ENCODE measurements at regions of chr5 and their contacts with region 1.

Region 1: DNA sequence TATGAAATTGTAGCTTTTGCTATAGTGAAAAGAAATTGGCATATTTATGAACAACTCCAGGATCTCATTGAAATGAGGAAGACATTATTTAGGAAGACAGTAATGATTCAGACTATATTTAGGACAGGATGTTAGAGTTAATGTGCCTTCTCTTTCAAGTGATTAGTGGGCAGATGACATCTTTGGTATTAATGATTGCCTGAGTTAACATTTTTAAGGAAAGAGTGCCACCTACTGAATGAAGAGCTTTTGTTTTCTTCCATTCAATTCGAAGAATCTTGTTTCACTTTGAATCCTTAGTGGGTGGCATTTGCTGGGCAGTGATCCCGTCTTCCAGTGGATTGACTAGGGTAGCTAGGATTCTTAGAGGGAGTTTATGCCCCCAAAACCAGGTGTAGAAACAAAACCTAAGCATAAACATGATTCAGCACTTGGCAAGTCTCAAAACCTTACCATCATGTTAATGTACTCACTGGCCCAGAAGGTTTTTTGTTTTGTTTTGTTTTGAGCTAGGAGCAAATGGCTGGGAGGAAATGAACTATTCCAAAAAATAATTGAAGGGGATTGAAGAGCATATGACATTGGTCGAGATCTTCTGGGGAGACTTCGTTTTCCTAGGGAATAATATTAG is 23.2 kb downstream of the MAP3K1 start:
- DNase-seq: peak; percentile 33
- ATAC-seq: no peak
- H3K4me3 ChIP-seq: no peak overlapping the region
- H3K27ac ChIP-seq: no peak overlapping the region
- H3K4me1 ChIP-seq: peaks cover 53% of the 10 kb centered on the region
- H3K27me3 ChIP-seq: no peaks in the 10 kb centered on the region
- CTCF ChIP-seq: peak; percentile 66
- EP300 ChIP-seq: no peak
- POLR2A ChIP-seq: no peak
- RAD21 ChIP-seq: peak; percentile 56

Region 2: GRCh38 chr5:56396634-56397033 is 441.9 kb before region 1 on chr5:
- CTCF ChIA-PET with region 1: no interaction called
- POLR2A ChIA-PET with region 1: no interaction called
- in situ Hi-C with region 1: no loop called
- intact Hi-C with region 1: no loop called
- DNase-seq: no peak
- ATAC-seq: no peak
- H3K4me3 ChIP-seq: no peak overlapping the region
- H3K27ac ChIP-seq: no peak overlapping the region
- H3K4me1 ChIP-seq: no peaks in the 10 kb centered on the region
- H3K27me3 ChIP-seq: no peaks in the 10 kb centered on the region
- CTCF ChIP-seq: no peak
- EP300 ChIP-seq: no peak
- POLR2A ChIP-seq: no peak
- RAD21 ChIP-seq: no peak

Region 3: DNA sequence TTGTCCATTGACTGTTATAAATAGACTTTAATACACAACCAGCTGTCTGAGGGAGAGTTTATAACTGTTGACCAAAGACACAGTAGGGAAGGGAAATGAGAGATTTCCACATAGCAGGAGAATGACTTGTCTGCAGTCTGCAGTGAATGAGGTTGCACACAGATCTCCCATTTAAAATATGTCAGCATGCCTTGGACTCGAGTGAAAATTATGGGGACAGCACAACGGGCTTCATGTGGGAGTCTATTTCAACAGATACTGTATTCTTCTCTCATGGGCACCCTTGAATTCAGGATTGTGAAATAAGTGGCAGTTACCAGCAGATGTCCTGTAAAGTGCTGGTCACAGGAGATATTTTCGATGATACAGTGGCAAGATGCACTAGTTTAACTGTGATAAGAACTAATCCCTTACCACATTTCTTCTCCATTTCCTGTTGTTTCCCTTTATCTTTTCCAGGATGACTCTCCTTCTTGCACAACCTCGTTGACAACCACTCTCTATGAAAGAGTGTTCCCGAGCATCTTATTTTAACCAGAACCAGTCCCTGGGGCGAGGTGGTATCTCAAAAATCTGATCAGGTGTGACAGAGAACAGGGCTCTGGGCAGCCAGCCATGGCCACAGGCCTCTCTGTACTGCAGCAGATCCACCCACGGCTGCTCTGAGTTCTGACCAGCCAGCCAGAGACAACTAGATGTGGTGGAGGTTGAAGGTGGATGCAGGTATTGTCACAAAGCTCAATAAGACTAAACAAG is 74.6 kb before region 1 on chr5:
- CTCF ChIA-PET with region 1: no interaction called
- POLR2A ChIA-PET with region 1: no interaction called
- in situ Hi-C with region 1: no loop called
- intact Hi-C with region 1: loop called (anchors 2 kb)
- DNase-seq: peak; percentile 26
- ATAC-seq: peak; percentile 76
- H3K4me3 ChIP-seq: peak overlapping the region in 1 of 3 experiments; percentile 9; a peak in 1 of 6 replicates
- H3K27ac ChIP-seq: no peak overlapping the region
- H3K4me1 ChIP-seq: peaks cover 18% of the 10 kb centered on the region
- H3K27me3 ChIP-seq: peaks cover 3 to 7% of the 10 kb centered on the region in 2 experiments; a peak in 3 of 5 replicates
- CTCF ChIP-seq: no peak
- EP300 ChIP-seq: no peak
- POLR2A ChIP-seq: no peak
- RAD21 ChIP-seq: no peak

Region 4: DNA sequence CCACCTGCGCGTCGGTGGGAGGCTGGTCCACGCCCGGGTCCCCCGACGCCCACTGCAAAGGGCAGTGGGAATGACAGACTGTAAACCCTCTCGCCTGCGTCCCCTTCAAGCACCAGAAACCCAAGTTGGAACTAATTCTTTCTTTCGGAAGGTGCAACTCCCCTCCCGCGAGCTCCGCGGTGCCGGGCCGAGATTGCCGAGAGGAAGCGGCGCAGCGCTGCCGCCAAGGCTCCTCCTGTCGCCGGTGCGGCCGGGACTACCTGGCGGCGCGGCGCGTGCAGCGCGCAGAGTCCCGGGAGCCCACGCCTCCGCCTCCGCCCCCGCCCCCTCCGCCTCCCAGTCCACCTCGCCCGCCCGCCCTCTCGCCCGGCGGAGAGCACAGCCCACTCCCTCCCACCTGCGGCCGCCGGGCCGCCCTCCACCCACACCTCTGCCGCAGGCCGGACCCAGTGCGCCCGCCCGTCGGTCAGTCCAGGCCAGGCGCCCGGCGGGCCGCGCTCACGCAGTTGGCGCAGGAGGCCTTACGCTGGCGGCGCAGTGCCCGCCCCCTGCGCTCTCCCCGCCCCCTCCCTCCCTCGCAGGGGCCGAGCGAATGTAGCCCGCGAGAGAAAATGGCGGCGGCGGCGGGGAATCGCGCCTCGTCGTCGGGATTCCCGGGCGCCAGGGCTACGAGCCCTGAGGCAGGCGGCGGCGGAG is 23.4 kb before region 1 on chr5 and contains the start of gene MAP3K1:
- CTCF ChIA-PET with region 1: no interaction called
- POLR2A ChIA-PET with region 1: no interaction called
- in situ Hi-C with region 1: no loop called
- intact Hi-C with region 1: loop called (anchors 1 kb)
- DNase-seq: peak; percentile 82
- ATAC-seq: peak; percentile 84
- H3K4me3 ChIP-seq: peak within 1 kb of the TSS; percentile 88 to 95 (median 89)
- H3K27ac ChIP-seq: peak within 1 kb of the TSS; percentile 93
- H3K4me1 ChIP-seq: peaks cover 43% of the 10 kb centered on the region
- H3K27me3 ChIP-seq: no peaks in the 10 kb centered on the region; a peak in 1 of 5 replicates
- CTCF ChIP-seq: peak; percentile 9; the same call in 1 of the 2 replicates
- EP300 ChIP-seq: no peak
- POLR2A ChIP-seq: peak; percentile 62 to 73; a peak in 3 of 4 replicates
- RAD21 ChIP-seq: peak; percentile 27
- total RNA-seq, gene MAP3K1: 30.3 and 44.1 TPM in 2 replicates

Region 5: GRCh38 chr5:56941981-56942380 is 103.5 kb after region 1 on chr5:
- CTCF ChIA-PET with region 1: no interaction called
- POLR2A ChIA-PET with region 1: no interaction called
- in situ Hi-C with region 1: no loop called
- intact Hi-C with region 1: no loop called
- DNase-seq: no peak
- ATAC-seq: no peak
- H3K4me3 ChIP-seq: no peak overlapping the region
- H3K27ac ChIP-seq: no peak overlapping the region
- H3K4me1 ChIP-seq: peaks cover 10% of the 10 kb centered on the region
- H3K27me3 ChIP-seq: no peaks in the 10 kb centered on the region
- CTCF ChIP-seq: no peak
- EP300 ChIP-seq: no peak
- POLR2A ChIP-seq: no peak
- RAD21 ChIP-seq: no peak

Measured in HepG2 (cell line).